Dorsolateral prefrontal cortex (tissue), 120 donors: ENCODE measurements at regions of chr16 and their contacts with region 1.

Region 1: GRCh38 chr16:52068447-52069074 is 478.4 kb downstream of the TOX3 start:
- DNase-seq: peak in 7 of 10 donors; percentile 23 to 72 (median 48)
- H3K4me3 ChIP-seq: peak overlapping the region in 11 of 59 donors; percentile 9 to 40 (median 18)
- H3K27ac ChIP-seq: peak overlapping the region in 56 of 59 donors; percentile 3 to 98 (median 90)
- H3K27me3 ChIP-seq: no peaks in the 10 kb centered on the region
- CTCF ChIP-seq: peak in 54 of 56 donors; percentile 37 to 79 (median 62)

Region 2: DNA sequence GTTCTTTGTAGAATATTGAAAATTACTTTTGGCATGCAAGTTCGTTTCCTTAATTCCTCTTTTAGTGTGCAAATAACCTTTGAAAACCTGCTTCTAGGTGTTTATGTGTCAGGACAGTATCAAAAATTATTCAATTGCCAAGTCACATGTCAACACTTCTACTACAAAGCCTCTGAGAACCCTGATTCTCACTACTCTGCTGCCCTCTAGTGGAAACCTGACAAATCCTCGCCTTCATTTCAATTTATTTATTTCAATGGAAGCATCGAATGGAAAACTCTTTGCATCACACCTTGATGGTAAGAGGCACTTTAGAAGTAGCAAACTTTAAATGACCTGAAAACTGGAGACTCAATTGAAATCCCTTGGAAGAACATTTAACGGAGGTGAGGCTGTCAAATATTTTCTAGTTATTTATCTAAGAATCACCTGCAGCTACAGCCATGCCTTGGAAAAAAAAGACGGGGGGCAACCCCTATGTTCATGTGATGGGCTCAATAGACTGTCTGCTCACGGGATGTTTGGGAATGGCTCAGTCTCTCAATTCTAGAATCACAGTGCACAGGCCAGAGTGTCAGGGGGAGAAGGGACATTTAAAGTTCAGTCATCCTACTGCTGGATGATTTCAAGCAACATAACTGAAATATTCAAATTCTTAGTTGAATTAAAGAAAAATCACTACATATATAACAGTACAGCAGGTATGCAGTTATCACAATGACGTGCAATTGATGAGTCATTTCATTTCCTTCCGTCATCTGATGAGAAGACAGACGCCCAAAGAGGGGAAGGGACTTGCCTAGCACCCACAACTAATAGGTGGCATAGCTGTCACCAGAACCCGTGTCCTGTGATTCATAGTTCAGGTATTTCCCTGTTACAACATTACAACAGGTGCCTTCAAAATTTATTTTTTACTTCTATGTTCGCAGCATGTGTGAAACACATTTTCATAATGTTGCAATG is 85.6 kb before region 1 on chr16:
- intact Hi-C with region 1: loop called in 1 of 2 experiments (anchors 5 kb)
- DNase-seq: peak in 4 of 10 donors; percentile 5 to 63 (median 34)
- H3K4me3 ChIP-seq: peak overlapping the region in 1 of 59 donors; percentile 1
- H3K27ac ChIP-seq: peak overlapping the region in 10 of 59 donors; percentile 2 to 67 (median 34)
- H3K27me3 ChIP-seq: peaks cover 0 to 6% (median 0%) of the 10 kb centered on the region in 45 donors
- CTCF ChIP-seq: peak; percentile 69 to 99 (median 89)

Region 3: GRCh38 chr16:52191531-52192134 is 123.1 kb after region 1 on chr16:
- intact Hi-C with region 1: loop called in 1 of 2 experiments (anchors 5 kb)
- DNase-seq: peak; percentile 53 to 88 (median 63)
- H3K4me3 ChIP-seq: no peak overlapping the region
- H3K27ac ChIP-seq: no peak overlapping the region
- H3K27me3 ChIP-seq: no peaks in the 10 kb centered on the region
- CTCF ChIP-seq: peak; percentile 84 to 99 (median 94)

Region 4: DNA sequence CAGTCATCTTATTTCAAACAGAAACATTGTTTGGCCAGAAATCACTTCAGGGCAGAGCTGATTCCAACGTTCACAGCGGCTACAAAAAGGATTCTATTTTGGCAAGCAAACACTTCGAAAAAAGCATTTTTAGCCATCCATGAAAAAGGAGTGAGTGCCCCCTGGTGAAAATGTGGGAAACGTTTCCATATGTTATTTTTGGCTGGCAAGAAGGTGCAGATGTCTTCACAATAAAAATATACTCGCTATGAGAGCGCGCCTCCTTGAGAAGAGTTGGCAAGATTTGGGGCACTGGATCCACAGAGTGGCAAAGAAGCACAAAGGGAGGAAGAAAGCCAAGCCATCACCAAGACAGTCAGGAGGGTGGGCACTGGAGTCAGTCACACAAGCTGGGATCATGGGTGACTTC is 793.1 kb after region 1 on chr16:
- intact Hi-C with region 1: loop called in 1 of 2 experiments (anchors 5 kb)
- DNase-seq: peak in 2 of 10 donors; percentile 4 to 22
- H3K4me3 ChIP-seq: no peak overlapping the region
- H3K27ac ChIP-seq: no peak overlapping the region
- H3K27me3 ChIP-seq: peaks cover 0 to 4% (median 0%) of the 10 kb centered on the region in 45 donors
- CTCF ChIP-seq: peak in 53 of 56 donors; percentile 11 to 54 (median 38)

Region 5: DNA sequence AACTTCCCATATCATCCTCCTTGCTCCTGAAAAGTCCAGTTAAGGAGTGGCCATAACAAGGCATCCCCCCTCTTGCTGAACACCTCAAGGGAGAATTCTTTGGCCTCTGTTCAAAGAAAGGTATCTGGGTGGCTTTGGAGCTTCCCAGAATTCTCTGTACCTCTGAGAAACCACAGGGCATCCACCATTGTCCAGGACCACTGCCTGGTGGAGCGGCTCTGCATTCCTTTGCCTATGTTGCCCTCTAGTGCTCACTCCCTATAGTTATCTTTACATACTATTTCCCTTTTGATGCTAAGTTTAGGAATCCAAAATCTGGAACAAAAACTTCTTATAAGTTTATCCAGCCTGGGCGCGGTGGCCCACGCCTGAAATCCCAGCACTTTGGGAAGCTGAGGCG is 953.8 kb after region 1 on chr16:
- intact Hi-C with region 1: loop called (anchors 1 to 2 kb)
- DNase-seq: peak in 7 of 10 donors; percentile 32 to 60 (median 44)
- H3K4me3 ChIP-seq: no peak overlapping the region
- H3K27ac ChIP-seq: no peak overlapping the region
- H3K27me3 ChIP-seq: no peaks in the 10 kb centered on the region
- CTCF ChIP-seq: peak; percentile 34 to 77 (median 64)